ENCODE measurements at regions of chr2 and their contacts with region 1.

Region 1: GRCh38 chr2:73233154-73233931 is at the start of gene PRADC1:
- DNase-seq: peak; percentile 90 to 97 (median 93)
- H3K4me3 ChIP-seq: peak within 1 kb of the TSS; percentile 88
- H3K4me3 Mint-ChIP-seq: peak within 1 kb of the TSS; percentile 95 to 99 (median 98)
- H3K27ac ChIP-seq: peak within 1 kb of the TSS; percentile 93
- H3K27ac Mint-ChIP-seq: peak within 1 kb of the TSS; percentile 81 to 98 (median 94)
- H3K4me1 ChIP-seq: peaks cover 26% of the 10 kb centered on the region
- H3K4me1 Mint-ChIP-seq: peaks cover 33 to 42% (median 41%) of the 10 kb centered on the region in 3 donors
- H3K27me3 ChIP-seq: no peaks in the 10 kb centered on the region
- H3K27me3 Mint-ChIP-seq: no peaks in the 10 kb centered on the region
- total RNA-seq, gene PRADC1: 21.1 to 24.9 TPM

Region 2: DNA sequence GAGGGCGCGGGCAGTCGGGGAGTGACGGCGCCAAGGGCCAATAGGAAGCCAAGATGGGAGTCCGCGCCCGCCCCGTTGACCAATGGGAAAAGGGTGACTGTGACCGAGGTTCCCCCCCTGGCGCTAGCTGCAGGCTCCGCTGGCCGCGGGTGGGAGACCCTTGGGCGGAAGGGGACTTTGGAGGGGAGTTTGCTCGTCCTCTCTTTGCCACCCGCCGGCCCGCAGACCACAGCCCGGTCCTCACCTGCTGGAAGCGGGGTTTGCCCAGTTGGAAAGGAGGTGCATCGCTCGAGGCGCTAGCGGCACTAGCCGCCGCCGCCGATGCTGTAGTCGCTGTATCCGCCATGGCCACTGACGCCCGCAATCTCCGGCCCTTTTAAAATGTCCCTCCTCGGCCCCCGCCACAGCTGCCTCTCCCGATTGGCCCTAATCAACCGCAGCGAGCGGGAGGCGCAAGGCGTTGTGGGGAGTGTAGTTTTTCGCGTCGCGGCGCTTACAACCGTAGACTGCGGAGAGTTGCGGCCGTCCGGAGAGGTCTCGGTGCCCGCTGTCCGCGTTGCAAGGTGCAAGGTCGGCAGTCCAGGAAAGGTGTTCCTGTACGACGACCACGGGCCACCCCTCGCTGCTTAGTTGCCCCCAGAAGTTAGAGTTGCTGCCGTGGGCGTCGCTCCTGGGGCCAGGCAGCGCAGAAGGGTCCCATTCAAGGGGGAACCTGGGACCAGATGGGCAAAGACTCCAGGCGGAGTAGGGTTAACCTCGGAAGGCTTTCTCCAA is 161.8 kb before region 1 on chr2 and contains the start of gene SFXN5:
- CTCF ChIA-PET with region 1: no interaction called
- POLR2A ChIA-PET with region 1: interaction called, 10 read pairs
- DNase-seq: peak; percentile 91 to 94 (median 93)
- H3K4me3 ChIP-seq: peak within 1 kb of the TSS; percentile 92
- H3K4me3 Mint-ChIP-seq: peak within 1 kb of the TSS; percentile 86 to 98 (median 93)
- H3K27ac ChIP-seq: peak within 1 kb of the TSS; percentile 85
- H3K27ac Mint-ChIP-seq: peak within 1 kb of the TSS; percentile 86 to 96 (median 90)
- H3K4me1 ChIP-seq: peaks cover 12% of the 10 kb centered on the region
- H3K4me1 Mint-ChIP-seq: peaks cover 26 to 32% (median 29%) of the 10 kb centered on the region in 3 donors
- H3K27me3 ChIP-seq: no peaks in the 10 kb centered on the region
- H3K27me3 Mint-ChIP-seq: peaks cover 0 to 5% of the 10 kb centered on the region in 2 donors
- total RNA-seq, gene SFXN5: 16.8 to 19.1 TPM

Region 3: GRCh38 chr2:73212448-73213176 is 20.7 kb before region 1 on chr2:
- CTCF ChIA-PET with region 1: interaction called, 47 read pairs
- POLR2A ChIA-PET with region 1: interaction called, 12 read pairs
- DNase-seq: peak; percentile 56 to 77 (median 60)
- H3K4me3 ChIP-seq: no peak overlapping the region
- H3K4me3 Mint-ChIP-seq: peak overlapping the region; percentile 58 to 95 (median 68)
- H3K27ac ChIP-seq: peak overlapping the region; percentile 61
- H3K27ac Mint-ChIP-seq: peak overlapping the region in 7 of 8 donors; percentile 10 to 96 (median 53)
- H3K4me1 ChIP-seq: peaks cover 28% of the 10 kb centered on the region
- H3K4me1 Mint-ChIP-seq: peaks cover 28 to 38% (median 29%) of the 10 kb centered on the region in 3 donors
- H3K27me3 ChIP-seq: no peaks in the 10 kb centered on the region
- H3K27me3 Mint-ChIP-seq: peaks cover 5 to 13% of the 10 kb centered on the region in 2 donors

Region 4: DNA sequence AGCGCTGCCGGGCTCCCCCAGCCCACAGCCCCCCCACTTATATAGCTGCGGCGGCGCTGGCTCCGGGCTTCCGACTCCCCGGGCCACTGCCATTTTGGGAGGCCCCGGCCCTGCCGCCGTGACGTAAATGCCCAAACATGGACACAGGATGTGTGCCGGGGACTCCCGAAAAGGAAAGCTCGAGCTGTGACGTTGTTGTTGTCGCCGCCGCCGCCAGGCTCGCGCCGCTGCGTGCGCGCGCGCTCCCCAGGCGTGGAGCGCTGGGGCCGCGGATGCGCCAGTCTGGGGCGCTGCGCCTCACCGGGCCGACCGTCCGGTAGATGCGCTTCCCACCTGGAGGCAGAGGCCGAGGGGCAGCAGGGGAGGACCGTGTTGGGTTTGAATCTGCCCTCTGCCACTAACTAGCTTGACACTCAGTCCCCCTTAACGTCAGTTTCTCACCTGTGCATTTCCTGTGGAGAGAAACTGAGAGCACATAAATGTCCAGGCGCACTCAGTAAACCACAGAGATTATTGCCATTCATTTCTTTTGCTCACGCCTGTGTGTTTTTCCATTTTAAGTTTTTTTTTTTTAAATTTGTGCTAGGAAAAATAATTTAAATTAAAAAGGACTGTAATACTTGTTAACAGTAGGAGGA is 60.3 kb after region 1 on chr2 and contains the start of gene EGR4:
- CTCF ChIA-PET with region 1: interaction called, 54 read pairs
- POLR2A ChIA-PET with region 1: interaction called, 25 read pairs
- DNase-seq: peak; percentile 85 to 95 (median 88)
- H3K4me3 ChIP-seq: peak within 1 kb of the TSS; percentile 21
- H3K4me3 Mint-ChIP-seq: peak within 1 kb of the TSS; percentile 65 to 90 (median 79)
- H3K27ac ChIP-seq: no peak within 1 kb of the TSS
- H3K27ac Mint-ChIP-seq: peak within 1 kb of the TSS in 4 of 8 donors; percentile 12 to 58 (median 27)
- H3K4me1 ChIP-seq: peaks cover 27% of the 10 kb centered on the region
- H3K4me1 Mint-ChIP-seq: peaks cover 8 to 34% (median 20%) of the 10 kb centered on the region in 3 donors
- H3K27me3 ChIP-seq: peaks cover 50% of the 10 kb centered on the region
- H3K27me3 Mint-ChIP-seq: peaks cover 46 to 67% of the 10 kb centered on the region in 2 donors
- total RNA-seq, gene EGR4: 0.31 to 0.55 TPM

Region 5: GRCh38 chr2:73307720-73308119 is 74.4 kb after region 1 on chr2:
- CTCF ChIA-PET with region 1: no interaction called
- POLR2A ChIA-PET with region 1: no interaction called
- DNase-seq: no peak
- H3K4me3 ChIP-seq: no peak overlapping the region
- H3K4me3 Mint-ChIP-seq: no peak overlapping the region
- H3K27ac ChIP-seq: no peak overlapping the region
- H3K27ac Mint-ChIP-seq: no peak overlapping the region
- H3K4me1 ChIP-seq: no peaks in the 10 kb centered on the region
- H3K4me1 Mint-ChIP-seq: no peaks in the 10 kb centered on the region
- H3K27me3 ChIP-seq: no peaks in the 10 kb centered on the region
- H3K27me3 Mint-ChIP-seq: peaks cover 10 to 56% of the 10 kb centered on the region in 2 donors

Region 6: GRCh38 chr2:73385595-73386341 is 152.4 kb after region 1 on chr2 and contains the start of gene ALMS1:
- CTCF ChIA-PET with region 1: no interaction called
- POLR2A ChIA-PET with region 1: interaction called, 10 read pairs
- DNase-seq: peak; percentile 81 to 93 (median 87)
- H3K4me3 ChIP-seq: peak within 1 kb of the TSS; percentile 78
- H3K4me3 Mint-ChIP-seq: peak within 1 kb of the TSS; percentile 89 to 96 (median 91)
- H3K27ac ChIP-seq: peak within 1 kb of the TSS; percentile 87
- H3K27ac Mint-ChIP-seq: peak within 1 kb of the TSS; percentile 94 to 99 (median 98)
- H3K4me1 ChIP-seq: peaks cover 21% of the 10 kb centered on the region
- H3K4me1 Mint-ChIP-seq: peaks cover 33 to 45% (median 38%) of the 10 kb centered on the region in 3 donors
- H3K27me3 ChIP-seq: no peaks in the 10 kb centered on the region
- H3K27me3 Mint-ChIP-seq: peaks cover 5 to 9% of the 10 kb centered on the region in 2 donors
- total RNA-seq, gene ALMS1: 18.8 to 20.1 TPM